ENCODE measurements at regions of chr14 and their contacts with region 1.

Region 1: DNA sequence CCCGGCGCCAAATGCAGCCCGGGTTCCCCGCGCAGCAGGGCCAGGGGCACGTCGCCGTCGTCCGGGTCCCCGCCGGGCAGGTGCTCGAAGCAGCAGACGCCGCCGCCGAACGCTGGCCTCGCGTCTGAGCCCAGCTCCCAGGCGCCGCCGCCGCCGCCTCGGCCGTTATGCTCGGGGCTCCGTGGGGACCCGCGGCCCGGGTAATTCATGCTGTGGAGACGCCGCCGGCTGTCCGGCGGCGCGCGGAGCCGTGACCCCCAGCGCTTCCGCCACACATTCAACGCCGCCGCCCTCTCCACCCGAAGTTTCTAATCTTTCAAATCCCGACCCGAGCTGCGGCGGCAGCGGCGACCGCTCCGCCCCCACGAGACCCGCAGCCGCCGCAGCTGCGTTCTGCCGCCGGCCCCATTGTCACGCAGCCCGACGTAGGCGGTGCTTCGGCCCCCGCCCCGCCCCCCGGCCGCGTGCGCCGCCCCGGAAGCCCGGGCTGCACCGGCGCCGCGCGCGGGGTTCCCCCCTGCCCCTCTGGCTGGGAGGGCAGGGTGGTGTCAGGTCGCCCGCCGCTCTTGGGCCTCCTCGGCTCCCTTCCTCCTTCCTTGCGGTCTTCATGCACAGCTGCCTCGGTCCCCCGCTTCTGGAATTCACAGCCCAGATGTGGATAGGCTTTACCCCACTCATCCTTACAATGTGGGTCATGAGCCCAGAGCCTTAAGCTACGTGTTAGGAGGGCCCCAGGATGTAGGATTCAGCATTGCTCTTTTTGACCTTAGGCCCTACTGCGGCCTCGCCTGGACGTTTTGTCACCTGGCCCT is at the start of gene DDHD1:
- DNase-seq: peak; percentile 69 to 96 (median 82)
- ATAC-seq: peak; percentile 82
- H3K4me3 ChIP-seq: peak within 1 kb of the TSS; percentile 98
- H3K4me3 Mint-ChIP-seq: peak within 1 kb of the TSS; percentile 99
- H3K27ac ChIP-seq: peak within 1 kb of the TSS; percentile 87 to 94
- H3K27ac Mint-ChIP-seq: peak within 1 kb of the TSS; percentile 97
- H3K4me1 ChIP-seq: peaks cover 26% of the 10 kb centered on the region
- H3K4me1 Mint-ChIP-seq: peaks cover 56% of the 10 kb centered on the region
- H3K27me3 ChIP-seq: no peaks in the 10 kb centered on the region
- H3K27me3 Mint-ChIP-seq: no peaks in the 10 kb centered on the region
- CTCF ChIP-seq: no peak
- total RNA-seq, gene DDHD1: 42.5 to 44.5 TPM

Region 2: DNA sequence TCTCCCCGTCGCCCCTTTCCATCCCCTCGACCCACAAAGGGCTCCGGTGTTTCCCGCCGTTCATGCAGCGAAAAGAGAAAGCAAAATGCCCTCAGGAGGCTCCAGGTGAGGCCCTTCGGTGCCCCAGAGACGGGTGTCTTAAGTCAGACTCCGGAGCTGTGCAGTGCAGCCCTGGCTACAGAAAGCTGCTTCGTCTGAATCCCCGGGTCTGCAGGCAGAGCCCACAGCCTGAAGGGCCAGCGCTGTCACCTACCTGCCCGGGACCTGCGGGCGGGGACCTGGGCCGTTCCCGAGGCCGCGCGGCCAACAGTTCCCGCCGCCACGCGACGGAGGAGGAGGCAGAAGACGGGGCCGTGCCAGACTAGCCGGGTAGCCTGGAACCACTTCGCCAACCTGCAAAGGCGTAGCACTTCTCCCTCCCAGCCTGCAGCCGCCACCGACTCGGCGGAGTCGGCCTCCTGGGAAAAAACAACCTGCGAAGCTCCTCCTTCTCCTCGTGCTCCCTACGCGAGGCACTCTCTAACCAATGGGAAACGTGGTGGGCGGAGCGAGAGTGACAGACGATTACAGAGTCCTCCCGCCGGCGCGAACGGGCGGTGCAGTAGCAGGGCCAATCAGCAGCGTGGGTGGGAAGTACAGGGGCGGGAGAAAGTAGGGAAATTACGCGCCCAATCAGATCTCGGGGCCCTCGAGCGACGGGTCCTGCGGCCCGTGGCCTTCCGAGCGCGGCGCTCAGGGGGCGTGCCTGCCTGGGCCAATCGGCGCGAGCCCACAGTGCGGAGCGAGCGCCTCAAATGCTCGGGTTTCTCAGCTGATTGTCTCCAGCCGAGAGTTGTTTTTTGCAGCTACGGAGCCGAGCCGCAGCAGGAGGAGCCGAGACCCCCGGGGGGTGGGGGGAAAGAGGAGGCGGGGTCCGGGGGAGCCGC is 600.8 kb before region 1 on chr14 and contains the starts of genes GPR137C and TXNDC16:
- CTCF ChIA-PET with region 1: no interaction called
- POLR2A ChIA-PET with region 1: interaction called, 31 read pairs
- intact Hi-C with region 1: loop called (anchors 5 to 10 kb)
- DNase-seq: peak; percentile 98 to 100 (median 99)
- ATAC-seq: peak; percentile 85
- H3K4me3 ChIP-seq: peak within 1 kb of the TSS; percentile 95
- H3K4me3 Mint-ChIP-seq: peak within 1 kb of the TSS; percentile 98
- H3K27ac ChIP-seq: peak within 1 kb of the TSS; percentile 80 to 88
- H3K27ac Mint-ChIP-seq: peak within 1 kb of the TSS; percentile 91
- H3K4me1 ChIP-seq: peaks cover 32% of the 10 kb centered on the region
- H3K4me1 Mint-ChIP-seq: peaks cover 39% of the 10 kb centered on the region
- H3K27me3 ChIP-seq: no peaks in the 10 kb centered on the region
- H3K27me3 Mint-ChIP-seq: peaks cover 15% of the 10 kb centered on the region
- CTCF ChIP-seq: no peak
- total RNA-seq, gene GPR137C: 0.08 to 0.19 TPM
- total RNA-seq, gene TXNDC16: 10.4 to 11.4 TPM

Region 3: GRCh38 chr14:52791203-52792096 is 361.6 kb before region 1 on chr14 and contains the start of gene GNPNAT1:
- CTCF ChIA-PET with region 1: no interaction called
- POLR2A ChIA-PET with region 1: interaction called, 9 read pairs
- intact Hi-C with region 1: loop called in 1 of 2 experiments (anchors 2 kb)
- DNase-seq: peak; percentile 79 to 97 (median 87)
- ATAC-seq: peak; percentile 97
- H3K4me3 ChIP-seq: peak within 1 kb of the TSS; percentile 95
- H3K4me3 Mint-ChIP-seq: peak within 1 kb of the TSS; percentile 94
- H3K27ac ChIP-seq: peak within 1 kb of the TSS; percentile 64 to 78
- H3K27ac Mint-ChIP-seq: peak within 1 kb of the TSS; percentile 92
- H3K4me1 ChIP-seq: peaks cover 21% of the 10 kb centered on the region
- H3K4me1 Mint-ChIP-seq: peaks cover 51% of the 10 kb centered on the region
- H3K27me3 ChIP-seq: no peaks in the 10 kb centered on the region
- H3K27me3 Mint-ChIP-seq: no peaks in the 10 kb centered on the region
- CTCF ChIP-seq: no peak
- total RNA-seq, gene GNPNAT1: 3.8 to 4.6 TPM

Region 4: DNA sequence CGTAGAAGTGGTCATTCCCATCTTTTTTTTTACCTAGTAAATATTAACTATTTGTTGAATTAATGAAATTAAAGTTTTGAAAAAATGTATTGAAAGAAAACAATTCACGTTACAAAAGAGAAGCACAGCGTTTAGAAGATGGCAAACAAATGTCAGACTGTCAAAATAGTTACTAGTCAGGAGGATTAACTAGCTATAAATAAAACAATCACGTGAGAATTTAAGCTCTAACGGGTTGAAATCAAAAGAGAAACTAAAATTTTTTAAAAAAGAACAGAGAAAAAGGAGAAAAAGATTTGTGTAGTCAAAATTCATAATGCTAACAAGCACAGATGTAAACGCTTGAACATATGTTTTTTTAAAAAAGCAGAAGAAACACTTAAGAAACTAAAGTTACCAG is 26.4 kb before region 1 on chr14:
- CTCF ChIA-PET with region 1: interaction called, 3 read pairs
- POLR2A ChIA-PET with region 1: interaction called, 25 read pairs
- intact Hi-C with region 1: no loop called
- DNase-seq: peak in 1 of 14 experiments; percentile 46
- ATAC-seq: no peak
- H3K4me3 ChIP-seq: peak overlapping the region; percentile 5
- H3K4me3 Mint-ChIP-seq: peak overlapping the region; percentile 76
- H3K27ac ChIP-seq: peak overlapping the region in 1 of 2 donors; percentile 20
- H3K27ac Mint-ChIP-seq: peak overlapping the region; percentile 73
- H3K4me1 ChIP-seq: peaks cover 12% of the 10 kb centered on the region
- H3K4me1 Mint-ChIP-seq: peaks cover 16% of the 10 kb centered on the region
- H3K27me3 ChIP-seq: no peaks in the 10 kb centered on the region
- H3K27me3 Mint-ChIP-seq: no peaks in the 10 kb centered on the region
- CTCF ChIP-seq: no peak

Region 5: GRCh38 chr14:53217295-53217994 is 64.3 kb after region 1 on chr14:
- CTCF ChIA-PET with region 1: interaction called, 10 read pairs
- POLR2A ChIA-PET with region 1: interaction called, 36 read pairs
- intact Hi-C with region 1: loop called in 1 of 2 experiments (anchors 5 kb)
- DNase-seq: peak; percentile 36 to 83 (median 58)
- ATAC-seq: peak; percentile 96
- H3K4me3 ChIP-seq: peak overlapping the region; percentile 58
- H3K4me3 Mint-ChIP-seq: peak overlapping the region; percentile 94
- H3K27ac ChIP-seq: no peak overlapping the region
- H3K27ac Mint-ChIP-seq: peak overlapping the region; percentile 51
- H3K4me1 ChIP-seq: peaks cover 10% of the 10 kb centered on the region
- H3K4me1 Mint-ChIP-seq: peaks cover 19% of the 10 kb centered on the region
- H3K27me3 ChIP-seq: no peaks in the 10 kb centered on the region
- H3K27me3 Mint-ChIP-seq: no peaks in the 10 kb centered on the region
- CTCF ChIP-seq: peak; percentile 56

Measured in CD4-positive, alpha-beta T cell (primary cell).